ENCODE measurements at regions of chr13 and their contacts with region 1.

Region 1: GRCh38 chr13:75687150-75687763 is 51.1 kb downstream of the LMO7 start:
- DNase-seq: peak in 1 of 2 donors; percentile 55
- H3K4me3 ChIP-seq: no peak overlapping the region
- H3K27ac ChIP-seq: no peak overlapping the region
- H3K4me1 ChIP-seq: peaks cover 0 to 3% (median 0%) of the 10 kb centered on the region in 4 donors
- H3K27me3 ChIP-seq: no peaks in the 10 kb centered on the region
- CTCF ChIP-seq: peak in 5 of 7 experiments; percentile 19 to 43 (median 33)
- EP300 ChIP-seq: no peak
- POLR2A ChIP-seq: no peak

Region 2: DNA sequence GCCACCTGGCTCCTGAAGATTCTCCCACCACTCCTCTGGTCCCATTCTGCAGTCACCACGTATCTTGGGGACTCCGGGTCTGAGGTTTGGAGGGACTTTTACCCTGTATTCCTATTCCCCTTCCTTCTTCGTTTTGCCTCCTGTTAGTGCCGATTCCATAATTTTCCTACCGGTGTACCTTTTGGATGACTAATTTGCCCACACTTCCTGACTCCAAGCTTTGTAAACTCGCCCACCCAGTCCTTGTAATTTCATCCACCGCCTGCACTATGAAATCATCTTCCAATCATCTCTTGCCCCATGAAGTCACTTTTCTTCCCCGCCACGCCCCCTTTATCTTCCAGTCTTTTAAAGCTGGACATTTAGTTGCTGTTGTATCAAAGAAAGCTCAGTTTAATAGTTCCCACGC is 137.1 kb before region 1 on chr13:
- intact Hi-C with region 1: no loop called
- DNase-seq: peak in 1 of 2 donors; percentile 79
- H3K4me3 ChIP-seq: peak overlapping the region; percentile 66 to 99 (median 88)
- H3K27ac ChIP-seq: peak overlapping the region; percentile 78 to 88 (median 84)
- H3K4me1 ChIP-seq: peaks cover 9 to 32% (median 17%) of the 10 kb centered on the region in 4 donors
- H3K27me3 ChIP-seq: no peaks in the 10 kb centered on the region
- CTCF ChIP-seq: no peak
- EP300 ChIP-seq: no peak
- POLR2A ChIP-seq: no peak

Region 3: DNA sequence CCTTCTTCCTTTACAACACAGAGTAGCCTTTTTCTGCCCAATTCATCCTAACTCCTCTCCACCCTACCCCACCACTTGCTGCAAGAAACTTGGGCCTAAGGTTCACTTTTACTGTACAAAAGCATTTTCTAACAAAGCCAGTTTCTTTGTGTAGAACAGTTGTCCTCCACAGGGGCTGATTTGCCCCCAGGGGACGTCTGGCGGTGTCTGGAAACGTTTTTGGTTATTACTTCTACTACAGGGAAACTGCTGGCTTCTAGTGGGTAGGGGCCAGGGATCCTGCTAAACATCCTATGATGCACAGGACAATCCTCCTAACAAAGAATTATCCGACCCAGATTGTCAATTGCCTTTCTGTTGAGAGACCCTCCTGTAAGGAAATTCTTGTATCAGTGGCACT is 58.4 kb before region 1 on chr13:
- intact Hi-C with region 1: no loop called
- DNase-seq: no peak
- H3K4me3 ChIP-seq: no peak overlapping the region
- H3K27ac ChIP-seq: no peak overlapping the region
- H3K4me1 ChIP-seq: no peaks in the 10 kb centered on the region
- H3K27me3 ChIP-seq: no peaks in the 10 kb centered on the region
- CTCF ChIP-seq: no peak
- EP300 ChIP-seq: no peak
- POLR2A ChIP-seq: no peak

Region 4: GRCh38 chr13:75864718-75865117 is 177.5 kb after region 1 on chr13:
- intact Hi-C with region 1: loop called (anchors 10 kb)
- DNase-seq: no peak
- H3K4me3 ChIP-seq: no peak overlapping the region
- H3K27ac ChIP-seq: no peak overlapping the region
- H3K4me1 ChIP-seq: no peaks in the 10 kb centered on the region
- H3K27me3 ChIP-seq: no peaks in the 10 kb centered on the region
- CTCF ChIP-seq: no peak
- EP300 ChIP-seq: no peak
- POLR2A ChIP-seq: no peak

Region 5: DNA sequence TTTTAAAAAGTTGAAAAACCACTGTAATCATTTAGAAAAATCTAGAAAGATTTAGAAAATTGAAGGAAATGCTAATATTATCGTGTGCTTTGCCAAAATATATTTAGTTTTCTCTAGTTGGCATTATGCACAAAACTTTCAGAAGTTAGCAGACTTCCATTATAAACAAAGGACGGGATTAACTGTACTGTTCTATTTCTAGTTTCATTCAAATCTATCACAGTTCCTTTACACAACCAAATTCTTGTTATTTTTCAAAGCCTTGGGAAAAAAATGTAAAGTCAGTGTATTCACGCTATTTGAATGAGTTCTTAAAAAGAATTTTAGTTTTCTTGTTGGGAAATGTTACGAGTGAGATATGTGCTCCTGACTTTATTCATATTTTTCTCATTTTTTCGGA is 226.7 kb after region 1 on chr13:
- intact Hi-C with region 1: no loop called
- DNase-seq: no peak
- H3K4me3 ChIP-seq: no peak overlapping the region
- H3K27ac ChIP-seq: peak overlapping the region in 4 of 5 donors; percentile 5 to 52 (median 29)
- H3K4me1 ChIP-seq: peaks cover 0 to 9% (median 0%) of the 10 kb centered on the region in 4 donors
- H3K27me3 ChIP-seq: no peaks in the 10 kb centered on the region
- CTCF ChIP-seq: no peak
- EP300 ChIP-seq: no peak
- POLR2A ChIP-seq: no peak